ENCODE measurements at regions of chr12 and their contacts with region 1.

Region 1: GRCh38 chr12:47725893-47726292 is 603 bp upstream of the ENDOU start:
- DNase-seq: no peak
- H3K4me3 Mint-ChIP-seq: no peak overlapping the region
- H3K27ac Mint-ChIP-seq: no peak overlapping the region
- H3K4me1 Mint-ChIP-seq: peaks cover 19% of the 10 kb centered on the region
- H3K27me3 Mint-ChIP-seq: no peaks in the 10 kb centered on the region

Region 2: DNA sequence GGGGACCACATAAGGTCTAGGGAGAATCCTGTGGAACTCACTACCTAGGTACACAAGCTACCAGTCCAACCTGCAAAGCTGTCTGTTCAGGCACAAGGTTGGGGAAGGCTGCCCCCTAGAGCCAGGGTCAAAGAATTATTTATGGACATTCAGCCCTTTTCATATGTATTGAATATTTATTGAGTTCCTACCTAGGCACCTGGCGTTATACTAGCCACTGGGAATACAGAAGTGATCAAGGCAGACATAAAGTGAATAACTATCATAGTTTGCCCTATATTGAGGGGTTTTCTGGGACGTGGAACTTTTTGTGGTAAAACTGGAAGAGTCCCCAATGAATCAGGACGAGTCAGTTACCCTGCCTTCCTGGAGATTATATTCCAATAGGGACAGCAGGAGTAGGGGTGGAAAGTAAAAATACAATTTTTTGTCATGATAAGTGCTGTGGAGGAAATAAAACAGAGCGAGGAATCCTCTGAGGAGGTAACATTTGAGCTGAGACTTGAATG is 41.4 kb after region 1 on chr12:
- CTCF ChIA-PET with region 1: interaction called, 20 read pairs
- intact Hi-C with region 1: no loop called
- DNase-seq: peak; percentile 89
- H3K4me3 Mint-ChIP-seq: no peak overlapping the region
- H3K27ac Mint-ChIP-seq: no peak overlapping the region
- H3K4me1 Mint-ChIP-seq: no peaks in the 10 kb centered on the region
- H3K27me3 Mint-ChIP-seq: no peaks in the 10 kb centered on the region

Measured in activated naive CD4-positive, alpha-beta T cell treated with anti-CD3 and anti-CD28 coated beads for 36 hours (primary cell).